Activated CD4-positive, alpha-beta T cell treated with anti-CD3 and anti-CD28 coated beads for 36 hours (primary cell): ENCODE measurements at regions of chrX and their contacts with region 1.

Region 1: GRCh38 chrX:101097546-101098453 is at the start of gene CENPI:
- DNase-seq: peak; percentile 95
- ATAC-seq: peak; percentile 99
- H3K4me3 Mint-ChIP-seq: peak within 1 kb of the TSS; percentile 79
- H3K27ac Mint-ChIP-seq: peak within 1 kb of the TSS; percentile 85
- H3K4me1 Mint-ChIP-seq: peaks cover 19% of the 10 kb centered on the region
- H3K27me3 Mint-ChIP-seq: no peaks in the 10 kb centered on the region
- total RNA-seq, gene CENPI: 19.6 to 20.6 TPM

Region 2: DNA sequence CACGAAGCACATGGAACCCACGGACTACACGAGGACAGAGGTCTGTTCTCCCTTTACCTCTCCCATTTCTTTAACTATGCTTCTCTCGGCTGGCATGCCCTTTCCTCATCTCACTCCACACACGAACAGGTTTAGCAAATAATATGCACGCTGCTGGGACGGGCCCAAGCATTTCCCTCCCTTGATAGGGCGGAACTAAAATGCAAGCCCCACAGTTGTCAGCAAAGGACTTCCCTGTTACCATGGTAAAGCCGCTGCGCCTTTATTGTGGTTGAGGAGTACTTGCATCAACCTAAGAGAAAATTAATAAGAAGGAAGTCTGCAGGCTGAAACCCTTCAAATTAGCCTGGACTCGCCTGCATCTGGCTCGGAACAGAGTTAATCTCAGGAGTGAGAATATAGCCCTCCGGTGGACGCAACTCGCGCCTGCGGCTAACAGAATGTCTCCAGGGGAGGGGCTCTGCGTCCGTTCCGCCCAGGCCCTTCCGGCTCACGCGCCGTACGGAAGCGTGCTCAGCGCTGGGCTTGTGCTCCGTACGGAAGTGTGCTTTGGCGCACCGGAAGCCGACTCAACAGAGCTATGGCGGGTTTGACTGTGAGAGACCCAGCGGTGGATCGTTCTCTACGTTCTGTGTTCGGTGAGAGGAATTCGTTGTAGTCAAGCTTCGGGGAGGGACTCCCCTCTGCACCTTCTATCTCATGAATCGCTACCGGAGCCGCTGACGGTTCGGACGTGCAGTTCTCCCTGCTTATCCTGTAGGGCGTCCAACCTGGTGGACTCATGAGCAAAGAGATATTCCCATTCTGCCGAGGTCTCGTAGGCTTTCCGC is 277.7 kb before region 1 on chrX and contains the start of gene CSTF2:
- CTCF ChIA-PET with region 1: no interaction called
- POLR2A ChIA-PET with region 1: no interaction called
- intact Hi-C with region 1: loop called in 1 of 2 experiments (anchors 2 kb)
- DNase-seq: peak; percentile 89
- ATAC-seq: peak; percentile 98
- H3K4me3 Mint-ChIP-seq: peak within 1 kb of the TSS; percentile 93
- H3K27ac Mint-ChIP-seq: peak within 1 kb of the TSS; percentile 99
- H3K4me1 Mint-ChIP-seq: peaks cover 8% of the 10 kb centered on the region
- H3K27me3 Mint-ChIP-seq: peaks cover 2% of the 10 kb centered on the region
- total RNA-seq, gene CSTF2: 53.8 to 54.3 TPM

Region 3: DNA sequence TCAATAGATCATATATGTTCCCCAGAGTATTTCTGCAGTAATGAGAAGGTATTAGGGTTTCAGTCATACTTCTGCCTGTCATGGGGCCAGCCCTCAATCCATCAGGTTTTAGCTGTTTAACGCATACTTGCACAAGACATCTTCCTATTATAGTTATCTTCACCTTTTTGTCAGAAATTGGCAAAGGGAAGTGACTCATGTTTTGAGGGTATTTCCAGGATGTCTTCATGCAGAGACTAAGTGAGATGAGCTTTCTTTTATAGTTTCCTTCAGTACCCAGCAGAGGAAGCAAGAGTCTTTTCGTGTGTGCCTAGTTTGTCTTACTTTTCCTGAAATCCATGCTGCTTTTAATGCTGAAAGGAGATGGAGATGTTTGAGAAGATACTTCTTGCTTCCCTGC is 268.1 kb before region 1 on chrX:
- CTCF ChIA-PET with region 1: no interaction called
- POLR2A ChIA-PET with region 1: no interaction called
- intact Hi-C with region 1: loop called in 1 of 2 experiments (anchors 5 kb)
- DNase-seq: peak; percentile 35
- ATAC-seq: peak; percentile 92
- H3K4me3 Mint-ChIP-seq: peak overlapping the region; percentile 59
- H3K27ac Mint-ChIP-seq: peak overlapping the region; percentile 96
- H3K4me1 Mint-ChIP-seq: peaks cover 28% of the 10 kb centered on the region
- H3K27me3 Mint-ChIP-seq: no peaks in the 10 kb centered on the region

Region 4: GRCh38 chrX:100883654-100884053 is 214.1 kb before region 1 on chrX:
- CTCF ChIA-PET with region 1: no interaction called
- POLR2A ChIA-PET with region 1: no interaction called
- intact Hi-C with region 1: no loop called
- DNase-seq: no peak
- ATAC-seq: no peak
- H3K4me3 Mint-ChIP-seq: no peak overlapping the region
- H3K27ac Mint-ChIP-seq: no peak overlapping the region
- H3K4me1 Mint-ChIP-seq: no peaks in the 10 kb centered on the region
- H3K27me3 Mint-ChIP-seq: no peaks in the 10 kb centered on the region

Region 5: GRCh38 chrX:100915562-100915961 is 182.2 kb before region 1 on chrX:
- CTCF ChIA-PET with region 1: no interaction called
- POLR2A ChIA-PET with region 1: no interaction called
- intact Hi-C with region 1: no loop called
- DNase-seq: no peak
- ATAC-seq: no peak
- H3K4me3 Mint-ChIP-seq: no peak overlapping the region
- H3K27ac Mint-ChIP-seq: no peak overlapping the region
- H3K4me1 Mint-ChIP-seq: no peaks in the 10 kb centered on the region
- H3K27me3 Mint-ChIP-seq: no peaks in the 10 kb centered on the region

Region 6: GRCh38 chrX:100928660-100929613 is 168.9 kb before region 1 on chrX and contains the start of gene XKRX:
- CTCF ChIA-PET with region 1: no interaction called
- POLR2A ChIA-PET with region 1: no interaction called
- intact Hi-C with region 1: loop called in 1 of 2 experiments (anchors 2 kb)
- DNase-seq: peak; percentile 74
- ATAC-seq: peak; percentile 78
- H3K4me3 Mint-ChIP-seq: peak within 1 kb of the TSS; percentile 79
- H3K27ac Mint-ChIP-seq: peak within 1 kb of the TSS; percentile 75
- H3K4me1 Mint-ChIP-seq: peaks cover 53% of the 10 kb centered on the region
- H3K27me3 Mint-ChIP-seq: no peaks in the 10 kb centered on the region
- total RNA-seq, gene XKRX: 0.78 to 1.0 TPM

Region 7: GRCh38 chrX:101348452-101349192 is 250.8 kb after region 1 on chrX and contains the start of gene TIMM8A:
- CTCF ChIA-PET with region 1: interaction called, 3 read pairs
- POLR2A ChIA-PET with region 1: no interaction called
- intact Hi-C with region 1: loop called (anchors 5 kb)
- DNase-seq: peak; percentile 88
- ATAC-seq: peak; percentile 98
- H3K4me3 Mint-ChIP-seq: peak within 1 kb of the TSS; percentile 85
- H3K27ac Mint-ChIP-seq: peak within 1 kb of the TSS; percentile 93
- H3K4me1 Mint-ChIP-seq: peaks cover 9% of the 10 kb centered on the region
- H3K27me3 Mint-ChIP-seq: no peaks in the 10 kb centered on the region
- total RNA-seq, gene TIMM8A: 12.8 to 23.8 TPM

Region 8: DNA sequence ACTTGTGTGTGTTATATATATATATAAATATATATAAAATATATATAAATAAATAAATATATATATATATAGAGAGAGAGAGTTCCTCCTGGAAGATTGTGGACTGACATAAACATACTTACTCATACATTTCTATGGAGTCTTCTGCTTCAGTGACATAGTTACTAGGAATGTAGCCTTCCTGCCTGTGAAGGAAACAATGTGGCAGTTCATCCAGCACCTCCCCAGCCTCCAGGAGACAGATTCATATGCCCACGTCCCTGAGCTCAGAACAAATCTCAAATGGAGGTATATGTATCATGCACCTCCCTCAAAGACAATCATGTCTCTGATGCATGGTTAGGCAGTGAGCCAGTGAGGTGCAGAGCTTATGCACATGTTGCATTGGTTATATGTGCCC is 262.2 kb after region 1 on chrX:
- CTCF ChIA-PET with region 1: no interaction called
- POLR2A ChIA-PET with region 1: no interaction called
- intact Hi-C with region 1: no loop called
- DNase-seq: no peak
- ATAC-seq: no peak
- H3K4me3 Mint-ChIP-seq: no peak overlapping the region
- H3K27ac Mint-ChIP-seq: no peak overlapping the region
- H3K4me1 Mint-ChIP-seq: peaks cover 2% of the 10 kb centered on the region
- H3K27me3 Mint-ChIP-seq: no peaks in the 10 kb centered on the region

Region 9: DNA sequence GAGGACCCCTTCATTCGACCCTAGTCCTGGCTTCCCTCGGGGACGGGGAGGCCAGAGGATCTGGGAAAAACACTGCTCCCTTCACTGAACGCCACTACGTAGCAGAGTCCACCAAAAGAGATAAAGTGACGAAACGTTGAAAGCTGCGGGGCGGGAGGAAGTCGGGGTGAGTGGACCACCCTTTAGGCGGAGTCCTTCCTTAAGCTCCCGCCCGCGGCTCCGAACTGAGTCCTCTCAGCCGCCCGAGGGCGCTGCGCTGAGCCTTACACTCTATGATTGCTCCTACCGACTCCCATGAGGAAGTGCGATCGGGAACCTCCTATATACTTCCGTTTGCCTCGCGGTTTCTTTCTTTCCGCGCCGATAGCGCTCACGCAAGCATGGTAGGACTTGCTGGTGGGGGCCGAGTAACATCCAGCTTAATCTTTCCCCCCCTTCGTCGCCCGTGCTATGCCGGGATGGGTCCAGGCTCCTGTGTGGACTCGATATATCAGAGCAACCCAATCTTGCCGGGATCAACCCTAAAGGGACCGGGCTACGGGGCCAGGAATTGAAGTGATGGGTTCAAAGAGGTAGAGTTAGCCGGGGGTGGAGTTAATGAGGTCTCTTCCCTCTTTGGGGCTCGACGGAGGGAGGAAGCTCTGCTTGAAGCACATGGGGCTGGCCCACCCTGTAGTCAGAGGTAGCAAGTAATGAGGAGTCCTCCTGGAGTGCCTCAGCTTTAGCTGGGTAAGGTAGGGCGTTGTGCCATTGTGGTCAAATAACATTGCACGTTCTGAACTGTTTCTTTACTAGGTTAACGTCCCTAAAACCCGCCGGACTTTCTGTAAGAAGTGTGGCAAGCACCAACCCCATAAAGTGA is 293.1 kb after region 1 on chrX and contains the start of gene RPL36A:
- CTCF ChIA-PET with region 1: no interaction called
- POLR2A ChIA-PET with region 1: no interaction called
- intact Hi-C with region 1: loop called (anchors 2 to 5 kb)
- DNase-seq: peak; percentile 90
- ATAC-seq: peak; percentile 97
- H3K4me3 Mint-ChIP-seq: peak within 1 kb of the TSS; percentile 95
- H3K27ac Mint-ChIP-seq: peak within 1 kb of the TSS; percentile 96
- H3K4me1 Mint-ChIP-seq: peaks cover 6% of the 10 kb centered on the region
- H3K27me3 Mint-ChIP-seq: peaks cover 3% of the 10 kb centered on the region
- total RNA-seq, gene RPL36A: 340 to 709 TPM

Region 10: GRCh38 chrX:101407748-101408531 is 310.1 kb after region 1 on chrX and contains the starts of genes GLA and HNRNPH2:
- CTCF ChIA-PET with region 1: no interaction called
- POLR2A ChIA-PET with region 1: no interaction called
- intact Hi-C with region 1: loop called in 1 of 2 experiments (anchors 5 kb)
- DNase-seq: peak; percentile 91
- ATAC-seq: peak; percentile 94
- H3K4me3 Mint-ChIP-seq: peak within 1 kb of the TSS; percentile 97
- H3K27ac Mint-ChIP-seq: peak within 1 kb of the TSS; percentile 97
- H3K4me1 Mint-ChIP-seq: peaks cover 26% of the 10 kb centered on the region
- H3K27me3 Mint-ChIP-seq: no peaks in the 10 kb centered on the region
- total RNA-seq, gene GLA: 32.6 to 42.2 TPM
- total RNA-seq, gene HNRNPH2: 18.6 to 26.9 TPM